GM10248 (cell line): ENCODE measurements at regions of chr2 and their contacts with region 1.

Region 1: GRCh38 chr2:63488118-63488713 is 100.1 kb downstream of the WDPCP start:
- DNase-seq: peak; percentile 12
- CTCF ChIP-seq: peak; percentile 51

Region 2: GRCh38 chr2:62787386-62787785 is 700.8 kb before region 1 on chr2:
- CTCF ChIA-PET with region 1: interaction called, 11 read pairs
- POLR2A ChIA-PET with region 1: no interaction called
- DNase-seq: peak; percentile 22
- CTCF ChIP-seq: peak; percentile 49

Region 3: GRCh38 chr2:63424329-63425078 is 63.7 kb before region 1 on chr2:
- CTCF ChIA-PET with region 1: no interaction called
- POLR2A ChIA-PET with region 1: no interaction called
- DNase-seq: peak; percentile 57
- CTCF ChIP-seq: peak; percentile 34

Region 4: DNA sequence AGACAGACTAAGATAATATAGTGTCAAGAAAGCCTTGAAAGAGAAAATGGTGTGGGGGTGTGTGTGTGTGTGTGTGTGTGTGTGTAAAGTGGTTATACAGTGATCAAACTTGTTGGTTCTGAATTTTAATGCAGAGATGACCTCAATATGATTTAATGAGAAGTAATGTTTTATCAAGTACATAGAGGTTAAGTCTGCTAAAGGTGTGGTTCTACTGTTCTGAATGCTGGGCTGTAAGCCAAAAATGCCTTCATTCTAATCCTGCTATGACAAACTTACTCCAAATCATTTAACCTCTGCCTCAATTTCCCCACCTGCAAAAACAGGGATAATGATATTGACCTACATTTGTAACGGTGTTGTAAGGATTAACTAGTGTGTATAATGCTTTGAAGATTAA is 12.2 kb after region 1 on chr2:
- CTCF ChIA-PET with region 1: interaction called, 16 read pairs
- POLR2A ChIA-PET with region 1: no interaction called
- DNase-seq: no peak
- CTCF ChIP-seq: no peak

Region 5: DNA sequence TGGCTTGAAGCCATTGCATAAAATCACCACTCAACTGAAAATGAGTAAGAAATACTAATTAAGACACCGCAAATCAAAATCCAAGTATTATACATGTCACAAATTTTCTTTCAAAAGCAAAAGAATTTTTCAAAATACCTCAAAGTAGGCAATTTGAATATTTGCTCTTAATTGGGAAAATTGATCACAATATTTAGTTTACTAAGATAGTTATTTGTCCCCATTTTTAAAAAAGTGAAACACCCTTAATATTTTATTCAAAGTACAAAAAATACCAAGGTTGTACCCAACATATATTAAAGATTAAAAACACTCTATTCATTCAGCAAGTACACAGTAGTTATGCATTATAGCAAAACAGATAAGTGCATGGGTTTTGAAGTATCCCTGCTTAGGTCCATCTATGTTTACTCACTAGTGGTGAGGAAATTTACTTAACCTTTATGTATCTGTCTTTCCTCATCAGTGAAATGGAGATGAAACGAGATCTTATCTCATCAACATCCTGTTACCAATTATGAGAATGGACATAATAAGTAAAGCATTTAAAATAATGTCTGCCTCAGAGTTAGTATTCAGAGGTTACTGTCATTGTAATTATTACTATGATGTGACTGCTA is 495.9 kb after region 1 on chr2:
- CTCF ChIA-PET with region 1: no interaction called
- POLR2A ChIA-PET with region 1: no interaction called
- DNase-seq: no peak
- CTCF ChIP-seq: no peak